Naive thymus-derived CD4-positive, alpha-beta T cell (primary cell): ENCODE measurements at regions of chr17 and their contacts with region 1.

Region 1: GRCh38 chr17:56779898-56780733 is 53.6 kb downstream of the C17orf67 start:
- DNase-seq: peak; percentile 81 to 92 (median 88)
- ATAC-seq: peak; percentile 99
- H3K4me3 ChIP-seq: peak overlapping the region; percentile 62
- H3K4me3 Mint-ChIP-seq: peak overlapping the region; percentile 87 to 99 (median 92)
- H3K27ac ChIP-seq: peak overlapping the region; percentile 82
- H3K27ac Mint-ChIP-seq: peak overlapping the region; percentile 92 to 100 (median 96)
- H3K4me1 ChIP-seq: peaks cover 0 to 18% of the 10 kb centered on the region in 2 donors
- H3K4me1 Mint-ChIP-seq: peaks cover 19 to 37% (median 31%) of the 10 kb centered on the region in 7 donors
- H3K27me3 ChIP-seq: no peaks in the 10 kb centered on the region
- H3K27me3 Mint-ChIP-seq: peaks cover 0 to 5% (median 0%) of the 10 kb centered on the region in 5 donors

Region 2: DNA sequence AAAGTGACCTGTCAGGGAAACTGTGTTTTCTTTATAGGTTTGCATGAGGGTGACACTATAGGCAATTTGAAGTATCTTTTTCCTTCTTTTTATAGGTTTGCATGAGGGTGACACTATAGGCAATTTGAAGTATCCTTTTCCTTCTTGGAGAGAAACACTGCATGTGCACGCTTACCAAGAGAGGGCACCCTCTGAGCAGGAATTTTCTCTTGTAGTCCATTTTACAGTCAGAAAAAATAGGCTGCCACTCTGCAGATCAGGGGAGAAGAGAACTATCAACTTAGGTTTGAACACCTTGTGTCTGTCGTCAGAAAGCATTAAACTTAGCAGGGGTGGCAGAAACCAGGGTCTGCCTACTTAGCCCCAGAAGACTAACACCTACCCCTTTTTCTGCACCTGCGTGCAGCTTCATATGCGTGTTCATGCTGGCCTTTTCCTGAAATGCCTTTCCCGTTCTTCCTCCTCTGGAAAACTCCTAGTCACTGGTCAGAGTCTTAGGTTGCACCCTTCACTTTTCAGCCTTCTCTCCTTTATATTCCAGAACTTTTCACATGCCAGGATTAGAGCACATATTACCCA is 1252.5 kb before region 1 on chr17:
- CTCF ChIA-PET with region 1: no interaction called
- POLR2A ChIA-PET with region 1: interaction called, 3 read pairs
- intact Hi-C with region 1: loop called in 1 of 2 experiments (anchors 1 kb)
- DNase-seq: peak in 1 of 9 donors; percentile 8
- ATAC-seq: no peak
- H3K4me3 ChIP-seq: no peak overlapping the region
- H3K4me3 Mint-ChIP-seq: no peak overlapping the region
- H3K27ac ChIP-seq: no peak overlapping the region
- H3K27ac Mint-ChIP-seq: no peak overlapping the region
- H3K4me1 ChIP-seq: no peaks in the 10 kb centered on the region
- H3K4me1 Mint-ChIP-seq: peaks cover 0 to 6% (median 0%) of the 10 kb centered on the region in 7 donors
- H3K27me3 ChIP-seq: no peaks in the 10 kb centered on the region
- H3K27me3 Mint-ChIP-seq: peaks cover 0 to 11% (median 0%) of the 10 kb centered on the region in 5 donors

Region 3: GRCh38 chr17:56499799-56500388 is 280.2 kb before region 1 on chr17:
- CTCF ChIA-PET with region 1: interaction called, 16 read pairs
- POLR2A ChIA-PET with region 1: interaction called, 4 read pairs
- intact Hi-C with region 1: loop called (anchors 1 to 2 kb)
- DNase-seq: peak in 7 of 9 donors; percentile 7 to 45 (median 32)
- ATAC-seq: no peak
- H3K4me3 ChIP-seq: no peak overlapping the region
- H3K4me3 Mint-ChIP-seq: no peak overlapping the region
- H3K27ac ChIP-seq: no peak overlapping the region
- H3K27ac Mint-ChIP-seq: no peak overlapping the region
- H3K4me1 ChIP-seq: no peaks in the 10 kb centered on the region
- H3K4me1 Mint-ChIP-seq: no peaks in the 10 kb centered on the region
- H3K27me3 ChIP-seq: no peaks in the 10 kb centered on the region
- H3K27me3 Mint-ChIP-seq: peaks cover 0 to 6% (median 0%) of the 10 kb centered on the region in 5 donors

Region 4: DNA sequence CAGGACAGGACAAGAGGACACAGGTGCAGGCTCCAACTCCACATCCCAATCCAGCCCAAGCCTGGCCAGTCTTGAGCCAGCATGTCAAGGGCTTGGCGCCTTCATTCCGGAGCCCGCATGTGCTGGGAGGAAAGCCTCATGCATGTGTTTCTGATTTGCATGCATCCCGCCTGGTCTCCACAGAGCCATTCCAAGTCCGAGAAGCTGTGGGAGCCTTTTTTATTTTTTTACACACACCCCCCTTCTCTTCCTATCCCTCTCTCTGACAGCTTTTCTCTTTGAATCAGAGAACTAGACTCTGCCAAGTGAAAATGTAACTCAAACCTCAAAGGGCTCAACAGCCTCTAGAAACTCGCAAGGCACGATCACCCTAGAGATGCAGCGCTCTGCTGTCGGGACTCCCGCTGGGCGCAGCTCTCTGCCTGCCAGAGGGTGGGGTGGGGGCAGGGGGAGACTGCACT is 141.5 kb before region 1 on chr17:
- CTCF ChIA-PET with region 1: interaction called, 3 read pairs
- POLR2A ChIA-PET with region 1: no interaction called
- intact Hi-C with region 1: loop called in 1 of 2 experiments (anchors 1 kb)
- DNase-seq: no peak
- ATAC-seq: no peak
- H3K4me3 ChIP-seq: no peak overlapping the region
- H3K4me3 Mint-ChIP-seq: no peak overlapping the region
- H3K27ac ChIP-seq: no peak overlapping the region
- H3K27ac Mint-ChIP-seq: no peak overlapping the region
- H3K4me1 ChIP-seq: no peaks in the 10 kb centered on the region
- H3K4me1 Mint-ChIP-seq: peaks cover 0 to 30% (median 13%) of the 10 kb centered on the region in 7 donors
- H3K27me3 ChIP-seq: no peaks in the 10 kb centered on the region
- H3K27me3 Mint-ChIP-seq: peaks cover 0 to 15% (median 0%) of the 10 kb centered on the region in 5 donors

Region 5: GRCh38 chr17:56715613-56716357 is 64.3 kb before region 1 on chr17:
- CTCF ChIA-PET with region 1: interaction called, 63 read pairs
- POLR2A ChIA-PET with region 1: interaction called, 10 read pairs
- intact Hi-C with region 1: loop called (anchors 1 kb)
- DNase-seq: peak; percentile 56 to 79 (median 70)
- ATAC-seq: peak; percentile 96
- H3K4me3 ChIP-seq: no peak overlapping the region
- H3K4me3 Mint-ChIP-seq: peak overlapping the region in 1 of 10 donors; percentile 14
- H3K27ac ChIP-seq: no peak overlapping the region
- H3K27ac Mint-ChIP-seq: peak overlapping the region in 1 of 9 donors; percentile 13
- H3K4me1 ChIP-seq: no peaks in the 10 kb centered on the region
- H3K4me1 Mint-ChIP-seq: peaks cover 4 to 13% (median 8%) of the 10 kb centered on the region in 7 donors
- H3K27me3 ChIP-seq: no peaks in the 10 kb centered on the region
- H3K27me3 Mint-ChIP-seq: peaks cover 0 to 4% (median 0%) of the 10 kb centered on the region in 5 donors

Region 6: DNA sequence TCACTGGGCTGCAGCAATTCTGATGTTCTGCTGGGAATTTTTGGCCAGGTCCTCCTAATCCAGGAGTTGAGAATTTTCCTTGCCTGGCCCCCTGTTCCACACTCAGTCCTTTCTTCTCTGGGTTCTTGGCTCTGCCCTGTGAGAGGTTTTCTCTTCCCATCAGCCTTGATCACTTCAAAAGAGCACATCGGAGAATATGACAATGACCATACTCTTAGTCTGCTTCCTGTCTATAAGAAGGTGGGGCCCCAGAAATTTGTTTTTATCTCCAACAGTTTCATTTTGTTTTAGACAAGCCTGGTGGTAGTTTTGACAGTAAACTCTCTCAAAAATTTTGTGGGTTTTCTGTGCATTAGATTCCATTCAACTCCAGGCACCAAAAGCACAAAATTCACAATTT is 17.1 kb before region 1 on chr17:
- CTCF ChIA-PET with region 1: interaction called, 8 read pairs
- POLR2A ChIA-PET with region 1: interaction called, 6 read pairs
- intact Hi-C with region 1: loop called (anchors 2 kb)
- DNase-seq: peak in 7 of 9 donors; percentile 17 to 35 (median 27)
- ATAC-seq: no peak
- H3K4me3 ChIP-seq: no peak overlapping the region
- H3K4me3 Mint-ChIP-seq: peak overlapping the region in 9 of 10 donors; percentile 5 to 63 (median 53)
- H3K27ac ChIP-seq: peak overlapping the region; percentile 30
- H3K27ac Mint-ChIP-seq: peak overlapping the region; percentile 26 to 95 (median 65)
- H3K4me1 ChIP-seq: peaks cover 0 to 14% of the 10 kb centered on the region in 2 donors
- H3K4me1 Mint-ChIP-seq: peaks cover 13 to 30% (median 23%) of the 10 kb centered on the region in 7 donors
- H3K27me3 ChIP-seq: no peaks in the 10 kb centered on the region
- H3K27me3 Mint-ChIP-seq: peaks cover 0 to 5% (median 0%) of the 10 kb centered on the region in 5 donors

Region 7: DNA sequence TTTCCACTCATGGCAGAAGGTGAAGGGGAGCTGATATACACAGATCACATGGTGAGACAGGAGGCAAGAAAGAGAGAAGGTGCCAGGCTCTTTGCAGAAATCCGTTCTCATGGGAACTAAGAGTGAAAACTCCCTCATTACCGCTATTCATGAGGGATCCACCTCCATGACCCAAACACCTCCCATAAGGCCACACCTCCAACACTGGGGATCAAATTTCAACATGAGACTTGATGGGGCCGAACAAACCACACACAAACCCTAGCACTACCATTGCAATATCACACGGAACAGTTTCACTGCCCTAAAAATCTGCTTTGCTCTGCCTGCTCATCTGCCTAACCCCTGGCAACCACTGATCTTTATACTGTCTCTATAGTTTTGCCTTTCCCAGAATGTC is 18.8 kb after region 1 on chr17:
- CTCF ChIA-PET with region 1: no interaction called
- POLR2A ChIA-PET with region 1: no interaction called
- intact Hi-C with region 1: no loop called
- DNase-seq: no peak
- ATAC-seq: no peak
- H3K4me3 ChIP-seq: no peak overlapping the region
- H3K4me3 Mint-ChIP-seq: no peak overlapping the region
- H3K27ac ChIP-seq: no peak overlapping the region
- H3K27ac Mint-ChIP-seq: no peak overlapping the region
- H3K4me1 ChIP-seq: no peaks in the 10 kb centered on the region
- H3K4me1 Mint-ChIP-seq: peaks cover 0 to 4% (median 0%) of the 10 kb centered on the region in 7 donors
- H3K27me3 ChIP-seq: no peaks in the 10 kb centered on the region
- H3K27me3 Mint-ChIP-seq: no peaks in the 10 kb centered on the region